Ascending aorta (tissue), 2 donors: ENCODE measurements at regions of chr9 and their contacts with region 1.

Region 1: GRCh38 chr9:94672811-94673487 is 33.6 kb upstream of the FBP1 start:
- DNase-seq: no peak
- H3K4me3 ChIP-seq: no peak overlapping the region
- H3K27ac ChIP-seq: peak overlapping the region; percentile 5 to 9
- H3K4me1 ChIP-seq: peaks cover 7 to 17% of the 10 kb centered on the region in 2 donors
- H3K27me3 ChIP-seq: no peaks in the 10 kb centered on the region
- CTCF ChIP-seq: no peak

Region 2: DNA sequence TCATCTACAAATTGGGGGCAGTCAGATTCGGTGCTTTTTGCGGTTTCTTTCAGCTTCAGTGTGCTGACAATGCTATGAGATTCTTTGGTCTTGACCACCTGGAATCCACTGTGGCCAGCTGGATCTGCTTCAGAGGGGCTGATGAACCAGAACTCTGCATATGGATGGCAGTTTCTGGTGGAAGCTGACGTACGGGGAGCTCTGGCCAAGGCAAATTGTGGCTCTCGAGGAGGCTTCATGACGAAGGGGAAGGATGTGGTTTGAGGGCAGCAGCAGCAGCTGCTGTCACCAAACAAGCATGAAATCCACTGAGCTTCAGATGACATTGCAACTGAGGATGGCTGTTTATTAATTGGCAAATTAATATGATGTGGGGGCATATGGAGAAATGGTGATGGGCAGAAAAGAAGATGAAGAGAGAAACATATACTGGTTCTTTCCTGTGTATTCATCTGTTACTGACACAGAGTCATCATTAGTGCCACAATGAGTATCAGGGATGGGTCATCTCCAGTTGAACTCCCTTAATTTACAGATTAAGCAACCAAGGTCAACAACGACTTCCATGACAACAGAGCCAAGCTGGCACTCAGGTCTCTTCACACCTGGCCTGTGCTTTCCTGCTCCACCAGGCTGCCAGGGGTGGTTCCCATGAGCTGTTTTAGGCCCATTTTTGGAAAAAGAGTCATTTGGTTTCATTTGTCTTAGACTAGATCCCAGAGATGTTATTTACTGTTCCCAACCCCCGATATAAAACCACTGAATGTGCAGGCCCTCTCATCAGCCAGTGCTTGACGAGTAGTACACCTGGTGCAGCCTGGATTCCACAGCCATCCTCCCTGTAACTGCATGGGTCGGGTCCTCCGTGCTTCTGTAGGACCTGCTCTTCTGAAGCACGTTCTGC is 188.3 kb after region 1 on chr9:
- intact Hi-C with region 1: loop called (anchors 10 kb)
- DNase-seq: peak; percentile 27 to 73
- H3K4me3 ChIP-seq: no peak overlapping the region
- H3K27ac ChIP-seq: peak overlapping the region in 1 of 2 donors; percentile 83
- H3K4me1 ChIP-seq: peaks cover 4 to 26% of the 10 kb centered on the region in 2 donors
- H3K27me3 ChIP-seq: no peaks in the 10 kb centered on the region
- CTCF ChIP-seq: no peak

Region 3: DNA sequence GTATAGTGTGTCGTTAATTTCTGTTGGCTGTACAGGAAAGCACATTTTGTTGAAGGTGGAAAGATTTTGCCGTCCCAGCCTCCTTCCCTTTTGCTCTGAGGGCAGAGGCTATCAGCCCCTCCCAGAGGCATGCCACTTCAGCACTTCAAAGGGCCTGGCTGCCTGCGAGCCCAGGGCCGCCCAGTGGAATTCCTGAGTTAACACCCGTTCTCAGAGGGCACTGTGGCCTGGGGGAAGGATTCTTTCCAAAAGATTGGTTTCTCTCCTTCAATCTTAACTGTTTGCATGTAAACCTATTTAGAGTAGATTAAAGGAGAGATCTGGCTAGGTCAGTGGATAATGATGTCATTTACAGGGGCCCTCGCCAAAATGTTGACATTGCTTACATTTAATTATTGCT is 406.0 kb after region 1 on chr9:
- intact Hi-C with region 1: loop called (anchors 5 kb)
- DNase-seq: peak in 1 of 2 donors; percentile 76
- H3K4me3 ChIP-seq: peak overlapping the region; percentile 25 to 47
- H3K27ac ChIP-seq: peak overlapping the region; percentile 84 to 95
- H3K4me1 ChIP-seq: peaks cover 37 to 85% of the 10 kb centered on the region in 2 donors
- H3K27me3 ChIP-seq: no peaks in the 10 kb centered on the region
- CTCF ChIP-seq: no peak

Region 4: DNA sequence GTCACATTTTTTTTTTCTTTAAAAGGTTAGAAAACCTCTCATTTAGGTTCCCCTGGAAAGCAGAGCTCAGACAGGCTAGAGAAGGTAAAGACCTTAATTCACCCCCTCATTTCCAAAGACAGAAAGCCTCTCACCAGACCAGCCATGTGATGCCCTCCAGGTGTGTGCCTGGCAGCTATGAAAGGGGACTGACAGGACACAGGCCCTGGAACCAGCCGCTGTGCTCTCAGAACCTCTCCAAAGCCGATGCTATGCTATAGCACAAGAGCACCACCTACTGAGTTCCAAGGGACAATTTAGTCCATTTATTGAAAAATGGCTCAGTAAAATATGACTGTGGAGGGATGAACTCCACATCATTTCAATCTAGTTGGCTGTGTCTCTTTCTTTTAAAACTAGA is 595.7 kb after region 1 on chr9:
- intact Hi-C with region 1: loop called (anchors 10 kb)
- DNase-seq: no peak
- H3K4me3 ChIP-seq: no peak overlapping the region
- H3K27ac ChIP-seq: no peak overlapping the region
- H3K4me1 ChIP-seq: no peaks in the 10 kb centered on the region
- H3K27me3 ChIP-seq: no peaks in the 10 kb centered on the region
- CTCF ChIP-seq: peak; percentile 9 to 54 (median 34)